ENCODE measurements at regions of chr5 and their contacts with region 1.

Region 1: DNA sequence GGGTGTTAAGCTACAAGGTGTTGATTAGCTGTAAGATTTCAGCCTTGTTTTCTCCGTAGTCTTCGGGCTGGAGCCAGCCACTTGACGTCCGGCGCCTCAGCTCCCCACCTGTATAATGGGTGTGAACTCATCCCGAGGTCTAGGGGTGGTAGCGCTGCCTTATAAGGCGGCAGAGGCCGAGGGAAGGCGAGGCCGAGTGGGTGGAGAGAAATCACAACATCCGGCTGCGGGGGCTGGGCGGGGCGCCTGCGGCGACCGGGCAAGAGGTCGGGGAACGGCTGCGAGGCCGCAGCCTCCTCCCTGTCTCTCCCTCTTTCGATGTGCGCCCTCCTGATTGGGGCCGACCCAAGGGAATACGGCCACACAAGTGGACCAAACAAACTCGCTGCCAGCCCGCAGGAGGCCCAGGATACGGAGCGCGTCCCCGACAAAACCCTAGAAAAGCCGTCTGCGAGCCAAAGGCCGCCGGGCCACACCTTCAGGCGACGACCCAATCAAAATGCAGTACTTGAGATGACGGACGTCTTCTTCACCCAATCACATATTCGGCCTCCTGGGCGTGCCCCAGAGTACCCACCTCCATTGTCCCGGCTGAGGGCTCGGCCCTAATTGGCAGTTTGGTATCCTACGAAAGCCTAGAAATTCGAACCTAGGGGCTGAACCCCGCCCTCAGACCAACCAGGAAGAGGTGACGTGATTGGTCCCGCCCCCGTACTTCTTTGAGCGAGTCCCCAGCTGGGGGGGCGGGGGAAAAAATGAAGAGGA is 493 bp upstream of the GRK6 start:
- DNase-seq: peak; percentile 100
- ATAC-seq: peak; percentile 87
- H3K4me3 Mint-ChIP-seq: peak overlapping the region; percentile 85
- H3K27ac Mint-ChIP-seq: peak overlapping the region; percentile 98
- H3K4me1 Mint-ChIP-seq: peaks cover 45% of the 10 kb centered on the region
- H3K27me3 Mint-ChIP-seq: no peaks in the 10 kb centered on the region

Region 2: GRCh38 chr5:177232761-177233160 is 193.2 kb before region 1 on chr5:
- CTCF ChIA-PET with region 1: no interaction called
- DNase-seq: no peak
- ATAC-seq: no peak
- H3K4me3 Mint-ChIP-seq: no peak overlapping the region
- H3K27ac Mint-ChIP-seq: no peak overlapping the region
- H3K4me1 Mint-ChIP-seq: peaks cover 4% of the 10 kb centered on the region
- H3K27me3 Mint-ChIP-seq: no peaks in the 10 kb centered on the region

Region 3: GRCh38 chr5:177412603-177413233 is 13.3 kb before region 1 on chr5:
- CTCF ChIA-PET with region 1: interaction called, 19 read pairs
- DNase-seq: no peak
- ATAC-seq: peak; percentile 67
- H3K4me3 Mint-ChIP-seq: peak overlapping the region; percentile 43
- H3K27ac Mint-ChIP-seq: peak overlapping the region; percentile 79
- H3K4me1 Mint-ChIP-seq: peaks cover 31% of the 10 kb centered on the region
- H3K27me3 Mint-ChIP-seq: no peaks in the 10 kb centered on the region

Region 4: GRCh38 chr5:177446200-177447065 is 20.4 kb after region 1 on chr5 and contains the start of gene PRR7:
- CTCF ChIA-PET with region 1: interaction called, 120 read pairs
- DNase-seq: peak; percentile 79
- ATAC-seq: peak; percentile 74
- H3K4me3 Mint-ChIP-seq: peak within 1 kb of the TSS; percentile 60
- H3K27ac Mint-ChIP-seq: peak within 1 kb of the TSS; percentile 76
- H3K4me1 Mint-ChIP-seq: peaks cover 39% of the 10 kb centered on the region
- H3K27me3 Mint-ChIP-seq: peaks cover 10% of the 10 kb centered on the region
- total RNA-seq, gene PRR7: 3.1 to 5.3 TPM